Mammary epithelial cell (primary cell): ENCODE measurements at regions of chr2 and their contacts with region 1.

Region 1: GRCh38 chr2:157497638-157498314 is 53.9 kb upstream of the CYTIP start:
- DNase-seq: peak; percentile 31
- H3K4me3 ChIP-seq: no peak overlapping the region
- H3K27ac ChIP-seq: no peak overlapping the region
- H3K4me1 ChIP-seq: no peaks in the 10 kb centered on the region
- H3K27me3 ChIP-seq: no peaks in the 10 kb centered on the region
- CTCF ChIP-seq: peak; percentile 83 to 85

Region 2: GRCh38 chr2:157355618-157356017 is 142.2 kb before region 1 on chr2:
- CTCF ChIA-PET with region 1: no interaction called
- dilution Hi-C with region 1: no loop called
- in situ Hi-C with region 1: no loop called
- intact Hi-C with region 1: no loop called
- DNase-seq: peak; percentile 20
- H3K4me3 ChIP-seq: no peak overlapping the region
- H3K27ac ChIP-seq: no peak overlapping the region
- H3K4me1 ChIP-seq: peaks cover 4% of the 10 kb centered on the region
- H3K27me3 ChIP-seq: no peaks in the 10 kb centered on the region
- CTCF ChIP-seq: no peak

Region 3: GRCh38 chr2:157460384-157460837 is 37.4 kb before region 1 on chr2:
- CTCF ChIA-PET with region 1: no interaction called
- dilution Hi-C with region 1: no loop called
- in situ Hi-C with region 1: no loop called
- intact Hi-C with region 1: no loop called
- DNase-seq: no peak
- H3K4me3 ChIP-seq: no peak overlapping the region
- H3K27ac ChIP-seq: no peak overlapping the region
- H3K4me1 ChIP-seq: no peaks in the 10 kb centered on the region
- H3K27me3 ChIP-seq: peaks cover 7% of the 10 kb centered on the region
- CTCF ChIP-seq: no peak

Region 4: DNA sequence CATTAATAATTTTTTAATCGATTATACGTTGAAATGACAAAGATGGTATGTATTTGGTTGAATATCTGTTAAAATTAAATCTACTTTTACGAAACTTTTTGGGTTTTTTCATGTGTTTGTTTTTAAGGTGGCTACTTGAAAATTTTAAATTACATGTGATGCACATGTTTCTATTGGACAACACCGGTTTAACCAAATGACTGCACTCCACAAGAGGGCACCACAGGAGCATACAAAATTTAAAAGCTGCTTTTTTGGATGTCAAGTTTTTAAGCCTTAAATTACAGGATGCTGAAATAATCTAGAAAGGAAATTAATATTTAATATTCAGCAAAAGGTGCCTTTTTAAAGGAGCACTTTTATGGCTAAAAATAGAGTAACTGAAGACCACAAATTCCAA is 279.7 kb after region 1 on chr2:
- CTCF ChIA-PET with region 1: no interaction called
- dilution Hi-C with region 1: no loop called
- in situ Hi-C with region 1: no loop called
- intact Hi-C with region 1: loop called (anchors 5 kb)
- DNase-seq: peak; percentile 28
- H3K4me3 ChIP-seq: no peak overlapping the region
- H3K27ac ChIP-seq: no peak overlapping the region
- H3K4me1 ChIP-seq: no peaks in the 10 kb centered on the region
- H3K27me3 ChIP-seq: no peaks in the 10 kb centered on the region
- CTCF ChIP-seq: peak; percentile 60 to 66